ENCODE measurements at regions of chr16 and their contacts with region 1.

Region 1: DNA sequence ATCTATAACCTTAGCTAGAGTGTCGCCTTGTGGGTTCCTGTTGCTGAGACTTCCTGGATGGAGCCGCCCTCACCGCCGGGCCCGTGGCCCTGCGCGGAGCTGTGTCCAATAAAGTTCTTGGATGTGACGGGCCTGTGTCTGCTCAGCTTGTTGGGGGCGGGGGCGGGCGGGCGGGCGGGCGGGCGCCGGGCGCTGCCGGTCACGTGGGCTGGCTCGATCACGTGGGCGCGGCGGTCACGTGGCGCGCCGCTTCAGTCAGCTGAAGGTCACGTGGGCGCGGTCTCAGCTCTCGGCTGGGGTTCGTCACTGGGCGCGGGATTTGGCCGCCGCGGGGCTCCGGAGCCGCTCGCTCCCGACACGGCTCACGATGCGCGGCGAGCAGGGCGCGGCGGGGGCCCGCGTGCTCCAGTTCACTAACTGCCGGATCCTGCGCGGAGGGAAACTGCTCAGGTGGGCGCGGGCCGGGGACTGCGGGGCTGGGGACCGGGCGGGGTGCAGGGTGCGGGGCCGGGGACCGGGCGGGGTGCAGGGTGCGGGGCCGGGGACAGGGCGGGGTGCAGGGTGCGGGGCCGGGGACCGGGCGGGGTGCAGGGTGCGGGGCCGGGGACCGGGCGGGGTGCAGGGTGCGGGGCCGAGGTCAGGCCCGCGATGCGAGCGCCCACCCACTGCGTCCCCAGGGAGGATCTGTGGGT is at the start of gene AMDHD2:
- DNase-seq: peak; percentile 80 to 97 (median 88)
- ATAC-seq: peak; percentile 69
- H3K4me3 ChIP-seq: peak within 1 kb of the TSS; percentile 67
- H3K4me3 Mint-ChIP-seq: peak within 1 kb of the TSS; percentile 98
- H3K27ac ChIP-seq: peak within 1 kb of the TSS; percentile 68 to 79
- H3K27ac Mint-ChIP-seq: peak within 1 kb of the TSS; percentile 100
- H3K4me1 ChIP-seq: peaks cover 63% of the 10 kb centered on the region
- H3K4me1 Mint-ChIP-seq: peaks cover 71% of the 10 kb centered on the region
- H3K27me3 ChIP-seq: no peaks in the 10 kb centered on the region
- H3K27me3 Mint-ChIP-seq: peaks cover 6% of the 10 kb centered on the region
- CTCF ChIP-seq: no peak
- total RNA-seq, gene AMDHD2: 171 to 177 TPM

Region 2: DNA sequence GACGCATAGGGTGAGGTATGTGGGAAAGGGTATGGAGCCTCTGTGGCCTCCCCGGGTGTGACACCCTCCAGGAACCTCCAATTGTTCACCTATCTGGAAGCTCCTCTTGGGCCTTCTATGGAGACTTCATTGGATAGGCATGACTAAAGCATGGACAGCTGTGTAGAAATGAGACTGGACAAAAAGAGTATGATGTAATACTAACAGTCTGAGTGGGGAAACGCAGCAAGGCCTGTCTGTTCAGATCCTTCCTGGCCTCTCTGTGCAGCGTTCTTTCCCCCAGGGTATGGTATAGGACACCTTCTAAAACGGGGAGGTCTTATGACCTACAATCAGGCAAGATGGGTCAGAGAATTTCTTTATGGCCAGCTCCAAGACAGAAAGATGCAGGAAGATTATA is 121.7 kb before region 1 on chr16:
- CTCF ChIA-PET with region 1: no interaction called
- POLR2A ChIA-PET with region 1: no interaction called
- intact Hi-C with region 1: no loop called
- DNase-seq: no peak
- ATAC-seq: no peak
- H3K4me3 ChIP-seq: no peak overlapping the region
- H3K4me3 Mint-ChIP-seq: no peak overlapping the region
- H3K27ac ChIP-seq: no peak overlapping the region
- H3K27ac Mint-ChIP-seq: no peak overlapping the region
- H3K4me1 ChIP-seq: no peaks in the 10 kb centered on the region
- H3K4me1 Mint-ChIP-seq: no peaks in the 10 kb centered on the region
- H3K27me3 ChIP-seq: no peaks in the 10 kb centered on the region
- H3K27me3 Mint-ChIP-seq: peaks cover 6% of the 10 kb centered on the region
- CTCF ChIP-seq: no peak

Region 3: DNA sequence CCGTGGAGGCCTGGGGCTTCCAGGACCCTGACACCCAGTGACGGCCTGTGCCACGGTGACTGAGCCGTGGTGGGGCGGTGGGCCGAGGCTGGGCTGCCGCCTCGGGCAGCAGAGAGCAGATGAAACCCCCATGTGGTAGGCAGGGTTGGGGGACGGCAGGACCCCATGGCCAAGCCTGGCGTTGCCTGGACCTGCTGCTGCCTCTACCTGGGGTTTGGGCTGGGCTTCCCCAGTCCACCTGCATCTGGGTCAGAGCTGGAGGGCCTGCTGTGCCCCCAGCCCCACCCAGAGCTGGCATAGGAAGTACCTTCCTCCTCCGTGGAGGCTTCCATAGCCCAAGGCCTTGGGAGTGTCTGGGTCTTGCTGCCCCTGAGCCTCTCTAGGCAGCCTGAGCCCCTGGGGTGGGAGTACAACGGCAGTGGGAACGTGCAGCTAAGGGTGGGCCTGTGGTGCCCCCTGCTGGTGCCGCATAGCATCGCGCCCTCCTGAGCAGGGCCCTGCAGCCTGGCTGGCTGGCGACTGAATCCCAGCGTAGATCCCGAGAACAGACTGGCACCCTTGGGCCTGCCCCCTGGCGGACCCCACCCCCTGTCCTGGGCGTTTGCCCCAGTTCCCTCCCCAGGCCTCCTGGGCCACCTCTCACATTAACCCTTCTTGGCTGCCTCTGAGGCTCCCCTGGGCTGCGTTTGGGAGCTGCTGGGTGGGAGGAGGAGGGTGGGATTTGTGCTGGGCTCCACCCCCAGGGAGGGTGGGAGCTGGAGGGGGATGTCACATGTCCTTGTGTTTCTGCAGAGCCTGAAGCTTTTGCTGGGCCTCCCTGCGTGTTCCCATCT is 19.1 kb before region 1 on chr16:
- CTCF ChIA-PET with region 1: no interaction called
- POLR2A ChIA-PET with region 1: no interaction called
- intact Hi-C with region 1: loop called in 1 of 2 experiments (anchors 2 kb)
- DNase-seq: peak; percentile 67 to 89 (median 76)
- ATAC-seq: peak; percentile 99
- H3K4me3 ChIP-seq: no peak overlapping the region
- H3K4me3 Mint-ChIP-seq: no peak overlapping the region
- H3K27ac ChIP-seq: no peak overlapping the region
- H3K27ac Mint-ChIP-seq: no peak overlapping the region
- H3K4me1 ChIP-seq: peaks cover 7% of the 10 kb centered on the region
- H3K4me1 Mint-ChIP-seq: peaks cover 4% of the 10 kb centered on the region
- H3K27me3 ChIP-seq: no peaks in the 10 kb centered on the region
- H3K27me3 Mint-ChIP-seq: no peaks in the 10 kb centered on the region
- CTCF ChIP-seq: peak; percentile 97

Region 4: DNA sequence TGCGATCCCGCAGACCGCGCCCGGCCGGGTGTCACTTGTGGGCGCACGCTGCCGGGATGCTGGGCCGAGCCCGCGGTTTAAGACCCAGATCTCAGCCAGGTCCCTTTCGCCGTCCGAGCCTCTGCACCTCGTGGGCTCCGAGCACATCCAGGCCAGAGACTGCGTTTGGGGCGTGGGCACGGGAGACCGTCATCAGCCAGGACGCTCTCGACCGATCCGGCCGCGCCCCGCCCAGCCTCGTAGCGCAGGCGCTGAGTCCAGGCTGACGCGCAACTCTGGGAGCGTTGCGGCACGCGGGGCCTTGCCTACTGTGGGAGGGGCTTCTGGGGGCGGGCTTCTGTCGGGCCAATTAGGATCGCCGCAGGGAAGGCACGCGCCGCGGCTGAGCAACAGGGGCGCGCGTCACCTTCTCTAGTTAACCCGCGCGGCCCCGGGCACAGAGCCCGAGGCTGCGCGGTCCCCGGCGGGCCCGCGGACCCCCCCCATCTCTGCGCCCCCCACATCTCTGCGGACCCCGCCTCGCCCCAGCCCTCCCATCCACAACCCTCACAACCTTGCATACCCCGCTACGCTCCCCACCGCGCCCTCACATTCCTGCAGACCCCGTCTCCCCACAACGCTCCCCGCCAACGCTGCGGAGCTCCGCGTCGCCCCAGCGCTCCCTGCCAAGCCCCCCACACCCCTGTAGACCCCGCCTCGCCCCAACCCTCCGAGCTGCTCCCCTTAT is 11.7 kb after region 1 on chr16:
- CTCF ChIA-PET with region 1: interaction called, 5 read pairs
- POLR2A ChIA-PET with region 1: interaction called, 135 read pairs
- intact Hi-C with region 1: loop called (anchors 1 kb)
- DNase-seq: peak; percentile 92 to 99 (median 97)
- ATAC-seq: peak; percentile 86
- H3K4me3 ChIP-seq: peak overlapping the region; percentile 94
- H3K4me3 Mint-ChIP-seq: peak overlapping the region; percentile 95
- H3K27ac ChIP-seq: peak overlapping the region; percentile 94 to 95
- H3K27ac Mint-ChIP-seq: peak overlapping the region; percentile 98
- H3K4me1 ChIP-seq: peaks cover 28% of the 10 kb centered on the region
- H3K4me1 Mint-ChIP-seq: peaks cover 22% of the 10 kb centered on the region
- H3K27me3 ChIP-seq: no peaks in the 10 kb centered on the region
- H3K27me3 Mint-ChIP-seq: peaks cover 8% of the 10 kb centered on the region
- CTCF ChIP-seq: no peak

Region 5: GRCh38 chr16:2537453-2538379 is 17.5 kb after region 1 on chr16 and contains the start of gene PDPK1:
- CTCF ChIA-PET with region 1: interaction called, 5 read pairs
- POLR2A ChIA-PET with region 1: interaction called, 135 read pairs
- intact Hi-C with region 1: loop called (anchors 1 kb)
- DNase-seq: peak; percentile 85 to 98 (median 92)
- ATAC-seq: peak; percentile 87
- H3K4me3 ChIP-seq: peak within 1 kb of the TSS; percentile 72
- H3K4me3 Mint-ChIP-seq: peak within 1 kb of the TSS; percentile 92
- H3K27ac ChIP-seq: peak within 1 kb of the TSS in 1 of 2 donors; percentile 68
- H3K27ac Mint-ChIP-seq: peak within 1 kb of the TSS; percentile 94
- H3K4me1 ChIP-seq: peaks cover 53% of the 10 kb centered on the region
- H3K4me1 Mint-ChIP-seq: peaks cover 37% of the 10 kb centered on the region
- H3K27me3 ChIP-seq: no peaks in the 10 kb centered on the region
- H3K27me3 Mint-ChIP-seq: peaks cover 3% of the 10 kb centered on the region
- CTCF ChIP-seq: no peak
- total RNA-seq, gene PDPK1: 46.1 to 51.1 TPM